Thyroid gland (tissue), 4 donors: ENCODE measurements at regions of chr1 and their contacts with region 1.

Region 1: GRCh38 chr1:205485338-205486228 is 18.9 kb upstream of the CDK18 start:
- DNase-seq: peak; percentile 73 to 74
- H3K4me3 ChIP-seq: no peak overlapping the region
- H3K27ac ChIP-seq: no peak overlapping the region
- H3K4me1 ChIP-seq: peaks cover 0 to 6% of the 10 kb centered on the region in 2 donors
- H3K27me3 ChIP-seq: no peaks in the 10 kb centered on the region
- CTCF ChIP-seq: peak; percentile 84 to 96 (median 93)
- POLR2A ChIP-seq: no peak

Region 2: GRCh38 chr1:205354259-205354904 is 131.2 kb before region 1 on chr1:
- intact Hi-C with region 1: loop called (anchors 5 kb)
- DNase-seq: peak; percentile 66 to 67
- H3K4me3 ChIP-seq: no peak overlapping the region
- H3K27ac ChIP-seq: peak overlapping the region in 1 of 3 donors; percentile 15
- H3K4me1 ChIP-seq: peaks cover 8 to 11% of the 10 kb centered on the region in 2 donors
- H3K27me3 ChIP-seq: no peaks in the 10 kb centered on the region
- CTCF ChIP-seq: peak; percentile 75 to 88 (median 80)
- POLR2A ChIP-seq: no peak

Region 3: DNA sequence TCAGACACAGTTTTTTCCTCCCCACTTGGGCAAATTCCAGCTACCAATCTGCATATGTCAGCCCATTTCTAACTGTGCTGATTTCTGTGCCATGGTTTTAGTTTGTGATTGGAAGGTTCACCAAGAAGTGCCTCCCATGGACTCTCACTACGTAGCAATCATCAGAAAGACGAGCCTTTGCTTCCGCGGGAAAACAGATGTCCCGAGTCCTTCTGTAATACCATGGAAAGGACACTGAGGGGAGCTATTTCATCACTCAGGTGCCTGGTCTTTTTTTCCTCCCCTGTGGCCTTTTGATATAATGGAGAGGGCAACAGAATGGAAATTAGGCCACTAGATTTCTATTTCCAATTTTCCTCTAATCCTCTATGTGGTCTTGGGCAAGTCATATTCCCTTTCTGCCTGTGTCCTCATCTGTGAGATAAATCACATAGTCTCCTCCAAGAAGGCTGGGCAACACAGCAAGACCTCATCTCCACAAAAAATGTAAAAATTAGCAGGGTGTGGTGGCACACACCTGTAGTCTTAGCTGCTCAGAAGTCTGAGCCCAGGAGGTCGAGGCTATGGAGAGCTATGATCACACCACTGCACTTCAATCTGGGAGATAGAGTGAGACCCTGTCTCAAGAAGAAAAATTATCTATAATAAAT is 88.5 kb before region 1 on chr1:
- intact Hi-C with region 1: loop called (anchors 5 kb)
- DNase-seq: peak; percentile 20 to 29
- H3K4me3 ChIP-seq: no peak overlapping the region
- H3K27ac ChIP-seq: no peak overlapping the region
- H3K4me1 ChIP-seq: no peaks in the 10 kb centered on the region
- H3K27me3 ChIP-seq: no peaks in the 10 kb centered on the region
- CTCF ChIP-seq: peak; percentile 27 to 95 (median 84)
- POLR2A ChIP-seq: no peak

Region 4: GRCh38 chr1:205523891-205524793 is 38.6 kb after region 1 on chr1:
- intact Hi-C with region 1: loop called (anchors 2 kb)
- DNase-seq: peak; percentile 73 to 81
- H3K4me3 ChIP-seq: no peak overlapping the region
- H3K27ac ChIP-seq: no peak overlapping the region
- H3K4me1 ChIP-seq: peaks cover 0 to 6% of the 10 kb centered on the region in 2 donors
- H3K27me3 ChIP-seq: no peaks in the 10 kb centered on the region
- CTCF ChIP-seq: peak; percentile 23 to 85 (median 75)
- POLR2A ChIP-seq: no peak

Region 5: DNA sequence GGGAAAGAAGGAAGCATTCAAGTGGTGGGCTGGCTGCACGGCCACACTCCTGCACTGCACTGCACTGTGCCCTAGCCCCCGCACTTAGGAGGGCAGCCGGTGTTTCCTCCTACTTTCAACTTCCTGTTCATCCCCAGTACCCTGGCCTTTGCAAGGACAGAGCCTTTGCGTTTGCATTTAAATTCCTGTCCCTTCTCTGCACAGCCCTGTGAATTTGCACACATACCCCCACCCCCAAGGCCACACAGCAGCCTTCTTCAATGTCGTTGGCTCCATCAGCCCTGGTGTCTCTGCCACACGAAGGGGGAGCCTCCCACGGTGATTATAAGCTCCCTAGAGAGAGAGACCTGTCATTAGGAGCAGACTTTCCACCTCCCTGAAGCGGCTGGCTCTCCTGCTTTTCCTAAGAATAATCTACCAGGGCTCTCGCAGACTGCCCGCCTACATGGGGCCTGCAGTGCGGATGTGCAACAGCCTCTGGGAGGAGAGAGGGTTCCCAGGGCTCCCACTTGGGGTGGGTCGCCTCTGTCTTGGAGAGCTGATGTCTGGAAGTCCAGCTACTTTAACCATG is 207.9 kb after region 1 on chr1:
- intact Hi-C with region 1: no loop called
- DNase-seq: no peak
- H3K4me3 ChIP-seq: no peak overlapping the region
- H3K27ac ChIP-seq: no peak overlapping the region
- H3K4me1 ChIP-seq: no peaks in the 10 kb centered on the region
- H3K27me3 ChIP-seq: no peaks in the 10 kb centered on the region
- CTCF ChIP-seq: no peak
- POLR2A ChIP-seq: no peak